HCT116 (cell line): ENCODE measurements at regions of chr6 and their contacts with region 1.

Region 1: DNA sequence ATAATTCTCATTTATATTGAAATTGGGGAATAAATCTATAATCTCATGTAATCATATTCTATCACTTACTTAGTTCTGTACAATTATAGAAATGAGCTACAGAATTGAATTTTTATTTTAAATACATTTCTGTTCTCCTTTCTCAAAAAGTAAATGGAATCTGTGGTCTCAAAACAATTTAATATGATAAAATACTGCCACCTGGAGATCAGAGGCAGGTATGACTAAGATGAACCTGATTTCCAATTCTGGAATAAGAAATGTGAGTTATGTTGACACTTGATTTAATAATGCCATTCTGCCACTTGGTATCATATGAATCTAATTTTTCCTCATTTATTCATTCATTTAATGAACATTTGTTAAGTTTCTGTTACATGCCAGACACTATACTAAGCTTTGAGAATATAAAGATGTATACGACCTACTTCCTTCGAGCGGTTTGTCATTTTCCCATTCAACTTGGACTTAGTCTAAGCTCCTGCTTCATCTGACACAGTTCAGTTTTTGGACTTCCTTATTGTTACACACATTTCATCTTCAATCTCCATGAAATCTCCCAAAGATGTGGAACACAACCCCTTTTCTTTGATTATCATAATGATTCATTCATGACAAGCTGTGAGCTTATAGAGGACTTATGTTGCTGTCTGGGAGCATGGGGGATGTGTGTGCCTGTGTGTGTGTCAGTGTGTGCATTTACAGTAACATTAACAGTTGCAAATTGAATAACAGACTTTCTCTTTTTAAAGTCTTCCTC is 7.5 kb upstream of the CCDC28A start:
- DNase-seq: peak; percentile 29
- ATAC-seq: peak; percentile 63; the same call in 1 of the 2 replicates
- H3K4me3 ChIP-seq: no peak overlapping the region
- H3K27ac ChIP-seq: no peak overlapping the region
- H3K4me1 ChIP-seq: no peaks in the 10 kb centered on the region
- H3K27me3 ChIP-seq: no peaks in the 10 kb centered on the region
- CTCF ChIP-seq: peak; percentile 49 to 84 (median 76)
- POLR2A ChIP-seq: no peak
- RAD21 ChIP-seq: peak; percentile 87

Region 2: DNA sequence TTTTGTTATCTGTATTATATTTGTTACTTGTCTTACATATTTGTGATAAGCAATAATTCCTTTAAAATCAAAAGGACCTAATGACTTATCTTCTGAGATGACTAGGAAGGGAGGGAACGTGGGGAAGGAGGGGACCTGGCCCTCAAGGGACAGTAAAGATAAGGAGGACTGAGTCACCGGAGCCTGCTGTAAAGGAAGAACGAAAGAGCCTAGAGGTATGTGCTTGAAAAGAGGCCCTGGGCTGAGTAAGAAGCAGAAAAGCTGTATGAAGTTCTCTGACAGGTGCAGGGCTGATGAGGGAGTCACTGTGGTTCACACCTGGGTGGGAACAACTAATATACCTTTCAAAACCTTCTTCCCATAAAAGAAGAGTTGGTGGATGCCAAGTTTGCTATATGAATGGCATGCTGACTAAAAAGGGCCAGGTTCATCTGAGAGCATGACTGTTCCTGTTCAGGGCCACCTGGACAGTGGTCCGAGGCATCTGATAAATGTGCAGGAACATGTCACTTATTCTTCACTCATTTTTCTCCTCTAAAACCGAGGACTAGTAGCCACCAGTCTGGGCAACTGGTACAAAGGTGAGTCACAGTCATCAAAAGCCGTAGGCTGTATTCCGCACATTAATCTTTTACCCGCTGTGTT is 787.7 kb before region 1 on chr6:
- CTCF ChIA-PET with region 1: no interaction called
- POLR2A ChIA-PET with region 1: no interaction called
- RAD21 ChIA-PET with region 1: no interaction called
- intact Hi-C with region 1: no loop called
- DNase-seq: peak; percentile 48
- ATAC-seq: peak; percentile 87
- H3K4me3 ChIP-seq: peak overlapping the region in 1 of 2 experiments; percentile 28; a peak in 2 of 4 replicates
- H3K27ac ChIP-seq: no peak overlapping the region; the same call in 1 of the 2 replicates
- H3K4me1 ChIP-seq: peaks cover 7 to 21% of the 10 kb centered on the region in 2 experiments
- H3K27me3 ChIP-seq: no peaks in the 10 kb centered on the region
- CTCF ChIP-seq: no peak
- POLR2A ChIP-seq: no peak
- RAD21 ChIP-seq: no peak

Region 3: DNA sequence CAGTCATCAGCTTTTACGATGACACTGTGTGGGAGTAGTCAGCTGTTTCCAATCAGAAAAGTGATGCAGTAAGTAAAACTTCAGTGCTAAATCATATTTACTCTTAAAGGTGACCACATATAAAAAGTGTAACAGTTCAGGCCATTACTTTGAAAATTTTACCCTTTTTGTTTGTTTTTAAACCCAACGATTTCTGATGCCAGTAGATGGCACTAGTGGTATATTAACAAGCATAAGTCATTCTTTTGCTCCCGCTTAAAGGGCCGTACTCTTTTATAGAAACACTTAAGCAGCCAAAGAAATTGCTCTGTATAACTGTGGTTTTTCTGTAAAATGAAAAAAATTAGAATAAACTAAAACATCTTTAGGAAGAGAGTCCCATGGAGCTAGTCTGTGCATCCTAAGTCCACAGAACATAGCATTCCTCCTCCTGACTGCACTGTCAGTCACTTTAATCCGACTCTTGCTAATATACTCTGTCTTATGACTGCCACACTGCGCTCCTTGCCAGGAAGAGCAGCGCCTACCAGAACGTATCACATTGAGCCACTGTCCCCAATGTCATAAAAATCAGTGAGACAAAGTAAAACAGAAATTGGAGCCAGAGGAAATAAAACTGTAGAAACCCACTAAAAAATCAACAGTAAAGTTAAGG is 337.0 kb before region 1 on chr6:
- CTCF ChIA-PET with region 1: interaction called, 3 read pairs
- POLR2A ChIA-PET with region 1: no interaction called
- RAD21 ChIA-PET with region 1: no interaction called
- intact Hi-C with region 1: loop called (anchors 2 kb)
- DNase-seq: peak; percentile 21
- ATAC-seq: peak; percentile 72
- H3K4me3 ChIP-seq: no peak overlapping the region
- H3K27ac ChIP-seq: no peak overlapping the region
- H3K4me1 ChIP-seq: no peaks in the 10 kb centered on the region
- H3K27me3 ChIP-seq: no peaks in the 10 kb centered on the region
- CTCF ChIP-seq: peak; percentile 57 to 81 (median 75); a peak in 5 of 6 replicates
- POLR2A ChIP-seq: no peak
- RAD21 ChIP-seq: peak; percentile 87

Region 4: GRCh38 chr6:138588805-138589434 is 177.2 kb before region 1 on chr6:
- CTCF ChIA-PET with region 1: interaction called, 13 read pairs
- POLR2A ChIA-PET with region 1: no interaction called
- RAD21 ChIA-PET with region 1: no interaction called
- intact Hi-C with region 1: loop called (anchors 1 kb)
- DNase-seq: peak; percentile 67
- ATAC-seq: peak; percentile 64
- H3K4me3 ChIP-seq: no peak overlapping the region
- H3K27ac ChIP-seq: no peak overlapping the region
- H3K4me1 ChIP-seq: peaks cover 6 to 25% of the 10 kb centered on the region in 2 experiments; a peak in 3 of 4 replicates
- H3K27me3 ChIP-seq: no peaks in the 10 kb centered on the region
- CTCF ChIP-seq: peak; percentile 76 to 94 (median 88); a peak in 5 of 6 replicates
- POLR2A ChIP-seq: no peak
- RAD21 ChIP-seq: peak; percentile 91

Region 5: DNA sequence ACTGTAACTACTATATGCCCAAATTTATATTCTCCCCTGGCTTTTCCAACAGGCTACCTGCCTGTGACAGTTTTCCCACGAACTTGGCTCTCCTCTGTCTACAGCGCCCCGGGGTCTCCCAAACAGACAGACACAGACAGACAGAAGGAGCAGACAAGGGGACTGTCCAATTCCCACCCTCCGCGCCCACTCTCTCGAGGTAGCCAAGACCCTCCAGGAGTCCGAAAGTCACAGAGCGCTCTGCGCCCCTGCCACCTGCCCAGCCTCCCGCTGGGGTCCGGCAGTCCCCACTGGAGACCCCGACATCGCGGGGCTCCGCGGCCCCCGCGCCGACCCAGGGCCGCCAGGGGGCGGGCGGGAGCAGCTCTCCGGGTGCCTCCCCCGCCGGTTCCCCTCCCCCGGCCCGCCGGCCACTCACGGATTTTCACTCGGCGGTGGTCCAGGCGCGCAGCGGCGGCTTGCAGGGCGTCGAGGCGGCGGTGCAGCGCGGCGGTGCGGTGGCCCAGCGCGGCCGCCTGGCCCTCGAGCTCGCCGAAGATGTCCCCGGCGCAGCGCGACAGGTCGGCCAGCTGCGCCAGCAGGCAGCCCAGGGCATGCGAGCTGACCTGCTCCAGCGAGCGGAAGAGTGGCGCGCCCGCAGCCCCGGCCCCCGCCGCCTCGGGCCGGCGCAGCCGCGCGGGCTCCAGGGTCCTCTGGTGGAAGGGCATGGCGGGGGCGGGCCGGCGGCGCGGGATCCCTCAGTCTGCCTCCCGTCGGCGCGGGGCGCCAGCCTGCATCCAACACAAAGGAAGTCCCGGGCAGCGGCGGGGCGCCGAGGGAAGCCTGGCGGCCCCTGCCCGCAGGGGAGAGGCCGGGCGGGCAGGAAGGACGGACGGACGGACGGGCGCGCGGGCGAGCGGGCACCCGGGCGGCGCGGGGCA is 73.8 kb before region 1 on chr6:
- CTCF ChIA-PET with region 1: interaction called, 3 read pairs
- POLR2A ChIA-PET with region 1: no interaction called
- RAD21 ChIA-PET with region 1: no interaction called
- intact Hi-C with region 1: loop called (anchors 2 kb)
- DNase-seq: no peak
- ATAC-seq: peak; percentile 58
- H3K4me3 ChIP-seq: peak overlapping the region; percentile 72 to 83
- H3K27ac ChIP-seq: peak overlapping the region; percentile 88
- H3K4me1 ChIP-seq: peaks cover 14 to 25% of the 10 kb centered on the region in 2 experiments
- H3K27me3 ChIP-seq: no peaks in the 10 kb centered on the region
- CTCF ChIP-seq: peak; percentile 38 to 79 (median 77); a peak in 4 of 6 replicates
- POLR2A ChIP-seq: no peak
- RAD21 ChIP-seq: peak; percentile 33; the same call in 1 of the 2 replicates